ENCODE measurements at regions of chr15 and their contacts with region 1.

Region 1: GRCh38 chr15:76336254-76337058 is at the start of gene ISL2:
- DNase-seq: peak; percentile 99
- H3K4me3 ChIP-seq: peak within 1 kb of the TSS; percentile 54 to 74
- H3K27ac ChIP-seq: peak within 1 kb of the TSS; percentile 95 to 99
- H3K4me1 ChIP-seq: peaks cover 4 to 26% of the 10 kb centered on the region in 2 experiments; a peak in 2 of 4 replicates
- H3K27me3 ChIP-seq: no peaks in the 10 kb centered on the region
- CTCF ChIP-seq: no peak
- EP300 ChIP-seq: no peak; a peak in 1 of 4 replicates
- RAD21 ChIP-seq: no peak
- polyA plus RNA-seq, gene ISL2: 3.5 and 6.0 TPM in 2 replicates

Region 2: DNA sequence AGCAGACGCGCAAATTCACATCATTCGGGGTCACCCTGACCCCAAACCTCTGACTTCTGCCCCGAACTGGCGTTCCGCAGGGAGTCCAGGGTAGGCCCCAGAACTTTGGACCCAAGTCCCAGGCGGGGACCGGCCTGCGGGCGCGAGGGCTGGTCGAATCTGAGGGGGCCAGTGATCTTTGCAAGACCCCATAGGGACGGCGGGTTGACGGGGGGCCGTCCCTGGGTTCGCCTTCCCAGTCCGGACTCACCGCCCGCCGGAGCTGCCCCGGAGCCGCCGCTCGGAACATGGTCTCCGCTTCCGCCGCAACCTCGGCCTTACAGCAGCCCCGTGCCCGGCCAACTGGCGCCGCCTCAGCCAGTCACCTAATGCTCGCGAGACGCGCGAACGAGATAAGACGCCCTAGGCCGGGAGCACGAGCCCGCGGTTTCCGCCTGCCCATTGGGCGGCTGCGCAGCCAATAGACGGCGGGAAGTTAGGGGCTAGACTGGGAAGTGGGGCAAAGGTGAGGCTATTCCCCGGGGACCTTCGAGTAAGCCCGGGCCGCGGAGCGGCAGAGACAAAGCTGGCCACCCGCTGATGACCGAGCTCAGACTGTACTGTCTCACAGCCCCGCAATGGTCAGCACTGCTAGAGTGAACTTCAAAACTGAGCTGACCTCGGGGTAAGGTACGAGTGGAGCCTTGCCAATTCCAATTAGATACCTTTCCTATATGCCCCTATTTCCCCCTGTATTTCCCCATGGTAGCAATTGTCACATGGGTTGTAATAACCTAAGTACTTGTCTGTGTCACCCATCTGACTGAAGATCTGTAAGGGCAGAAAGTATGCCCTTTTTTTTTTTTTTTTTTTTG is 25.1 kb before region 1 on chr15 and contains the start of gene ETFA:
- CTCF ChIA-PET with region 1: interaction called, 3 read pairs
- POLR2A ChIA-PET with region 1: interaction called, 12 read pairs
- DNase-seq: peak; percentile 97
- H3K4me3 ChIP-seq: peak within 1 kb of the TSS; percentile 81 to 91
- H3K27ac ChIP-seq: peak within 1 kb of the TSS; percentile 80 to 96
- H3K4me1 ChIP-seq: peaks cover 0 to 13% of the 10 kb centered on the region in 2 experiments; a peak in 2 of 4 replicates
- H3K27me3 ChIP-seq: no peaks in the 10 kb centered on the region
- CTCF ChIP-seq: no peak
- EP300 ChIP-seq: peak in 1 of 2 experiments; percentile 49; a peak in 1 of 4 replicates
- RAD21 ChIP-seq: no peak
- polyA plus RNA-seq, gene ETFA: 122 and 164 TPM in 2 replicates